Pancreas (tissue), 10 donors: ENCODE measurements at regions of chr2 and their contacts with region 1.

Region 1: DNA sequence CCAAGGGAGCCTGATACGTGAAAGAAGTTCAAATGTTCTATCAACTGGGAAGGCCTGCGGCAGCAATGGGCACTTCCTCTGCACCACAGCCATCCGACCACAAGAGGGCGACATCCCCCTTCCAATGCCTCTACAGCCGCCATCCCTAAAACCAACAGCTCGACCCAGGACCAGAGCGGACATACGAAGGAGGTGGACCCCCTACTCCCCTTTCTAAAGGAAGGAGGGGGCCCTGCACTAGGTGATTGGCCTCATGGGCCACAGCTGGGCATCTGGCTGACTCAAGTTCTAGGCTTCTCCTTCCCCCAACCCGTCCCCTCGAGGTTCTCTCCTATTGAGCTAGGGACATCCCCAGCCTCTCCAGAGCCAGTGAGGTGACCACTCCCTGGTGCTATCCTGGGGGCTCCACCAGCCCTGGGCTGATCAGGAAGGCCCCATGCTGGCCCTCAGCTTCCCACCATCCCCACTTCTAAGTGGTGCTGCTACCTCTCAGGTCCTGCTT is 217.2 kb downstream of the TNS1 start:
- DNase-seq: peak; percentile 44 to 93 (median 80)
- ATAC-seq: peak; percentile 70 to 89 (median 85)
- H3K4me3 ChIP-seq: no peak overlapping the region
- H3K27ac ChIP-seq: no peak overlapping the region
- H3K4me1 ChIP-seq: no peaks in the 10 kb centered on the region
- H3K27me3 ChIP-seq: no peaks in the 10 kb centered on the region
- CTCF ChIP-seq: peak; percentile 90 to 97 (median 96)

Region 2: DNA sequence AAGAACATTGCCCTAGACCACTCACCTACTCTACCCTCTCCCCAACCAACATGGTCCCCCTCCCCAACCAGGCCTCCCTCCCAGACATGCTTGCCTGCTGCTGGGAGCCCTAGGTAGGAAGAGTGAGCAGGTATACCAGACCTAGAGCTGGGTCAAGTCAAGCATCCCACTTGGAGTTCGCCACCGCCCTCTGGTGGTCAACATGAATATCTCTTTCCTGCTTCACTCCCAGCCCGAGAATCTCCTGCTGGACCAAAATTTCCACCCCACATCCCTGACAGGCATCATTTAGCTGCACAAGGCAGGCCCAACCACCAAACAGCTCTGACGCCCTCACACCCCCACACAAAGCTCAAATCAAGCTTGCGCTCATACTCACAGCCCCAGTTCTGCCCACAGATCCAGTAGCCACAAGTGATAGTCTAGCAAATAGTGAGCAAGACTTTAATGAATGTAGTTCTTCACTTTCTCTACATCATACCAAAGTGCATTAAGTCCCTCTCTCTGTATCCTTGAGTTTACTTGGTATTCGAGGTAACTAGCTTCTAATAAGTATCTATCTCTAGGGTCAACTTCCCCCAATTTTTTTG is 101.2 kb after region 1 on chr2:
- intact Hi-C with region 1: loop called in 1 of 3 experiments (anchors 5 kb)
- DNase-seq: peak in 5 of 6 donors; percentile 52 to 85 (median 76)
- ATAC-seq: peak; percentile 57 to 81 (median 76)
- H3K4me3 ChIP-seq: no peak overlapping the region
- H3K27ac ChIP-seq: no peak overlapping the region
- H3K4me1 ChIP-seq: no peaks in the 10 kb centered on the region
- H3K27me3 ChIP-seq: no peaks in the 10 kb centered on the region
- CTCF ChIP-seq: peak; percentile 58 to 67 (median 59)

Region 3: GRCh38 chr2:217993817-217994463 is 208.3 kb after region 1 on chr2:
- intact Hi-C with region 1: loop called in 2 of 3 experiments (anchors 5 kb)
- DNase-seq: peak; percentile 69 to 93 (median 76)
- ATAC-seq: peak; percentile 58 to 81 (median 72)
- H3K4me3 ChIP-seq: peak overlapping the region in 2 of 4 donors; percentile 17 to 32
- H3K27ac ChIP-seq: peak overlapping the region in 3 of 4 donors; percentile 75 to 89 (median 84)
- H3K4me1 ChIP-seq: peaks cover 14 to 33% (median 26%) of the 10 kb centered on the region in 3 donors
- H3K27me3 ChIP-seq: no peaks in the 10 kb centered on the region
- CTCF ChIP-seq: peak; percentile 51 to 77 (median 69)

Region 4: DNA sequence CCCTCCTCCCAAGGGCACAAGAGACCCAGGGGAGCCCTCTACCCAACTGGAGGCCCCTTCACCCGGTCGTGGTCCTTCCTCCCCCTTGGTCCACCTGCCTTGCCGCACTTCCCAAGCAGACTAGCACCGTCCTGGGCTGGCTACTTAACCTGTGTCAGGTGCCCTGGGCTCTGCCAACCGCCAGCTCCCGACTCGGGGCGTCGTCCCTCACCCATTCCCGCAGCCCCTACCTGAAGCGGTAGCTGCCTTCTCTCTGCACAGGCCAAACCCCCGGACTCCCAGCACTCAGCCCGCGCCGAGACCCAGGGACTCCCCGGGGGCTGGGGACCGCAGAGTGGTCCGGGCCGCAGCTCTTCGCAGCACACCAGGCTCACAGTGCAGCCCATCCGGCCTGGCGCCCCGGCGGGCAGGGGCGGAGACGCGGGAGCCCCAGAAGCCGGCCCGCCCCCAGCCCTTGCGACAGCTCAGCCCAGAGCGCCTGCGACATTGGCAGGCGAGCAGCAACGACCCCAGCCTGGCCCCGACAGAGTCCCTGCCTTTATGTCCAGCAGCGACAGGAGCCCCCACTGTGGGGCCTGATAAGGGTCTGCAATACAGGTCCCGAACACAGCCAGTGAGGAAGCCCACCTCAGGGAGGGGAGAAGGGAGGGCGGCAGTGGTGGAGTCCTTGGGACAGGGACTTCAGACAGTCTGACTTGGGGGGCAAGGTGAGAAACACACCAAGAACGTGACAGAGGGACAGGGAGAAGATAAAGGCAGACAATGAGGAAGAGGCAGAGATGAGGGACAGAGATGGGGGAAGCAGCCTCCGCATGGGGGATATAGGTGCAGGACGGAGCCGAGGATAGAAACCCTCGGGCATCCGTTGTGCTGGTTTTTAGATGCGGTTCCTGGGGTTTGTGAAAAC is 248.2 kb after region 1 on chr2:
- intact Hi-C with region 1: loop called in 2 of 3 experiments (anchors 5 to 10 kb)
- DNase-seq: peak in 3 of 6 donors; percentile 12 to 77 (median 59)
- ATAC-seq: no peak
- H3K4me3 ChIP-seq: peak overlapping the region in 1 of 4 donors; percentile 14
- H3K27ac ChIP-seq: no peak overlapping the region
- H3K4me1 ChIP-seq: peaks cover 0 to 3% (median 0%) of the 10 kb centered on the region in 3 donors
- H3K27me3 ChIP-seq: no peaks in the 10 kb centered on the region
- CTCF ChIP-seq: no peak

Region 5: DNA sequence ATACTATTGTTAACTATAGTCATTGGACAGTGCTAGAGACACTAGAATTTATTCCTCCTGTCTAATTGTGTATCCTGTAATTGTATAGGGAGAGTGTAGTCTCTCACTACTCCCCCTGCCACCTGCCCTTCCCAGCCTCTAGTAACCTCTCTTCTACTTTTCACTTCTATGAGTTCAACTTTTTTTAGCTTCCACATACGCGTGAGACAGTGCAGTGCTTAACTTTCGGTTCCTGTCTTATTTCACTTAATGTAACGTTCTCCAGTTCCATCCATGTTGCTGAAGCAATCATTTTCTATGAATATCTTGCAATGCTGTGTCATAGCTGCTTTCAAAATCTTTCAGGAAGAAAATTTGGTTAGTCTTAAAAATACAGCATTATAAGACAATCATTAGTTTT is 260.6 kb after region 1 on chr2:
- intact Hi-C with region 1: no loop called
- DNase-seq: no peak
- ATAC-seq: peak in 2 of 4 donors; percentile 52 to 67
- H3K4me3 ChIP-seq: no peak overlapping the region
- H3K27ac ChIP-seq: no peak overlapping the region
- H3K4me1 ChIP-seq: no peaks in the 10 kb centered on the region
- H3K27me3 ChIP-seq: no peaks in the 10 kb centered on the region
- CTCF ChIP-seq: no peak

Region 6: DNA sequence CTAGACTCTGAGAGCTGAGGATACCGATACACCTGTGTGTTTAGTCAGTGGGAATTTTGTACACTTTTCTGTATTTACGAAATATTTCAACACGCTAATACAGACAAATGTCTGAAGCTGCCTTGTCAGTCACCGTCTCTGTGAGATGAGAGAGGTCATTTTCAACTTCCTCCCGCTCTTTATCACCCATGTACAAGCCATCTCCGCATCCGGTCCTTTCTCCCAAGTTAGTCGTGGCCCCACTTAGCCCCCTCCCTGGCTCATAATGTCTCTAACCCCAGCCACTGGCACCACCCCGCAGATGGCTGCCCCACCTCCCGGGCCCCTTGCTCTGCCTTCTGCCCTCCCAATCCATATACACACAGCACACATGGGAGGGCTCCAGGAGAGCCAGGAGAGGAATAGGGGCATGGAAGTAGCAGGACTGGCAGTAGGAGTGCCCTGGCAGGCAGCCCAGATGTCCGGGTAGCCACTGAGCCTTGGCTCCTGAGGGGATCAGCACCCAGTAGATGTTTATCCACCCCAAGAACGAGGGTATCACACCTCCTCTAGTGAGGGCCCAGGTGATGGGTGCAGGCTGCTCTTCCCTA is 281.4 kb after region 1 on chr2:
- intact Hi-C with region 1: loop called in 1 of 3 experiments (anchors 5 kb)
- DNase-seq: peak in 1 of 6 donors; percentile 60
- ATAC-seq: no peak
- H3K4me3 ChIP-seq: no peak overlapping the region
- H3K27ac ChIP-seq: no peak overlapping the region
- H3K4me1 ChIP-seq: no peaks in the 10 kb centered on the region
- H3K27me3 ChIP-seq: no peaks in the 10 kb centered on the region
- CTCF ChIP-seq: no peak

Region 7: DNA sequence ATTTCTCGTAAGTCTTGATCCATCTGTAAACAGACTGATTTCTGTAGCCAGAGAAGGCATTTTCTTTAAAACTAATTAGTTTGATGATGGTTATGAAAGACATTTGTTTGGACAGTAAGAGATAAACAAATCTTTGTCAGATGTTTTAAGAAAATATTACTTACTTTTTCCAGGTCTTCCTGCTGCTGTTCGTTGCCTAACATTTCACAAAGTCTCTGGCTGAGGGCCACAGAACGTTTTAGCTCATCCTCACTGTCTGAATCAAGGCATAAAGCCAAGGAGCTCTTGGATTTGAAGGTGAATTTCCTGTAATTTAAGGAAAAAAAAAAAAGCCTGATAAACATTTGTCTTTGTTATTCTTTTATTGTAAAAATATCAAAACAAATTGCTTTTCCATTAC is 691.1 kb after region 1 on chr2:
- intact Hi-C with region 1: no loop called
- DNase-seq: no peak
- ATAC-seq: no peak
- H3K4me3 ChIP-seq: no peak overlapping the region
- H3K27ac ChIP-seq: no peak overlapping the region
- H3K4me1 ChIP-seq: no peaks in the 10 kb centered on the region
- H3K27me3 ChIP-seq: no peaks in the 10 kb centered on the region
- CTCF ChIP-seq: no peak